Left lung (tissue), 14 donors: ENCODE measurements at regions of chr4 and their contacts with region 1.

Region 1: DNA sequence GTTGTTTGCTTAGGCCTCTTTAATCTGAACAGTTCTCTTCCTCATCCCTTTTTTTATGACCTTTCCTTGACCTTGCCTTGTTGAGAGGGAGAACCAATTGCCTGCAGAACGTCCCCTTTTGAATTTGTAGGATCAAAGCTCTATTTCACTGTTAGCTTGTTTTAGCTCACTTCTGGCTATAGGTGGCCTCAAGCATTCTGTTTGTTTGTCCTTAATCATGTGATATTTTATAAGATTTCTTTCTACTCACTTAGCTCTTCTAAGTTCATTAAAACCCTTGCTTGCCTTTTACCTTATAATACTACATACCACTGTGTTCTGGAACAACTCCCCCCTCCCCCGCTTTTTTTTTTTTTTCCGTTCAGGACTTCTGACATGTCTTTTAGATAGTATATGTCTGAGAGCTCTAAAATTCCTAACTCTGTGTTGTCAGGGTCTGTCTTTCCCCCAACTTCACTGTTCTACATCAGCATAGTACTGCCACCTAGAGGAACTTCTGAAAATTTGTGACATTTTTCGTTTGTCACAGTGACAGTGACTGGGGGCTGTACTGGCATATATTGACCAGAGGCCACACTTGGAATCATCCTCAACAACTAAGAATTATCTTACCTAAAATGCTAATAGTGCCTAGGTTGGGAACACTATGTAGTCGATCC is 128.5 kb downstream of the LARP7 start:
- DNase-seq: peak in 1 of 4 donors; percentile 20
- ATAC-seq: peak; percentile 44
- H3K4me3 ChIP-seq: no peak overlapping the region
- H3K27ac ChIP-seq: no peak overlapping the region
- H3K4me1 ChIP-seq: no peaks in the 10 kb centered on the region
- H3K27me3 ChIP-seq: no peaks in the 10 kb centered on the region
- CTCF ChIP-seq: peak in 1 of 2 donors; percentile 19

Region 2: DNA sequence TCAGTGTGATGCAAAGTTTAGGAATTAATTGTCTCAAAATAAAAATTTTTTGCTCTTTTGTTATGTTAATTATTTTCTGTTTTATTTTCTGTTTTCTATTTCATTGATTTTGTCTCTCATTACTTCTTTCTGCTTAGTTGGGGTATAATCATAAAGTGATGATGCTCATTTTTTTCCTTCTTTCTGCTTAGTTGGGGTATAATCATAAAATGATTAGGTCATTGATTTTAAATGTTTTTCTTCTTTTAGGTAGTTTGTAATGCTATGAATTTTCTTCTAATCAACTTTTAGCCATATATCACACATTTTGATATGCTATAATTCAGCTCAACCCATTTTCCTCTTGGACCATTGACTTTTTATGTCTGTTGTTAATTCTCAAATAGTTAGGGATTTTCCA is 293.1 kb before region 1 on chr4:
- intact Hi-C with region 1: no loop called
- DNase-seq: no peak
- ATAC-seq: no peak
- H3K4me3 ChIP-seq: no peak overlapping the region
- H3K27ac ChIP-seq: no peak overlapping the region
- H3K4me1 ChIP-seq: no peaks in the 10 kb centered on the region
- H3K27me3 ChIP-seq: no peaks in the 10 kb centered on the region
- CTCF ChIP-seq: no peak

Region 3: DNA sequence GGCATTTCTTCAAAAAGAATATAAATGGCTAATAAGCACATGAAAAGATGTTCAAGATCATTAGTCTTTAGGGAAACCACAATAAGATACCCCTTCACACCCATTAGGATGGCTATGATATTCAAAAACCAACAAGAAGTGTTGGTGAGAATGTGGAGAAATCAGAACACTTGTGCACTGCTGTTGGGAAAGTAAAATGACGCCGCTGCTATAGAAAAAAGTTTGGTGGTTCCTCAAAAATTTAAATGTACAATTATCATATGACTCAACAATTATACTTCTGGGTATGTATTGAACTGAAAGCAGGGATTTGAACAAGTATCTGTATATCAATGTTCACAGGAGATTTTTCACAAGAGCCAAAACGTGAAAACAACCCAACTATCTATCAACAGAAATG is 220.1 kb before region 1 on chr4:
- intact Hi-C with region 1: no loop called
- DNase-seq: no peak
- ATAC-seq: no peak
- H3K4me3 ChIP-seq: no peak overlapping the region
- H3K27ac ChIP-seq: no peak overlapping the region
- H3K4me1 ChIP-seq: no peaks in the 10 kb centered on the region
- H3K27me3 ChIP-seq: no peaks in the 10 kb centered on the region
- CTCF ChIP-seq: no peak

Region 4: GRCh38 chr4:112636688-112637551 is 128.5 kb before region 1 on chr4 and contains the starts of genes LARP7 and ZGRF1:
- intact Hi-C with region 1: loop called in 1 of 2 experiments (anchors 10 kb)
- DNase-seq: peak; percentile 98 to 100 (median 100)
- ATAC-seq: peak; percentile 98
- H3K4me3 ChIP-seq: peak within 1 kb of the TSS; percentile 59 to 63
- H3K27ac ChIP-seq: peak within 1 kb of the TSS; percentile 90 to 96
- H3K4me1 ChIP-seq: peaks cover 0 to 20% of the 10 kb centered on the region in 2 donors
- H3K27me3 ChIP-seq: no peaks in the 10 kb centered on the region
- CTCF ChIP-seq: peak; percentile 94 to 95
- polyA plus RNA-seq, gene LARP7: 84.3 to 109 (median 94.7) TPM
- polyA plus RNA-seq, gene ZGRF1: 17.2 to 31.8 (median 22.3) TPM